ENCODE measurements at regions of chr4 and their contacts with region 1.

Region 1: DNA sequence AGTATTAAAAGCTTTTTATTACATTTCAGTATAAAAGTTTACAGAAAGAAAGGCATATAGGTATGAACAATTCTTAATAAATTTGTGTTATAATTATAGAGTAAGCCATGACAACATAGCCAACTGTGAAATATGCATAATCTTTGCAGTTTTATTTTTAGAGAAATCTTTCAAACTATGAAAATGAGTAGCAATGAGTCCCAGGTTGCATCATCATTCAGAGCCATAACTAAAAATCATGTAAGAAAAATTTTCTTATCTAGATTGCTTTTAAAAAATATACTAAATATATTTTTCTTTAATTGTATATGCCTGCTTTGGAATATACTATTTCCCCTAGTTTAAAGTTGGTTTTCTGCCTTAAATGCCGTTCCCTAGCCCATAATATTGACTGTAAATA is 54.8 kb upstream of the NAF1 start:
- DNase-seq: no peak
- H3K4me3 Mint-ChIP-seq: no peak overlapping the region
- H3K27ac Mint-ChIP-seq: no peak overlapping the region
- H3K4me1 Mint-ChIP-seq: no peaks in the 10 kb centered on the region
- H3K27me3 Mint-ChIP-seq: peaks cover 5% of the 10 kb centered on the region

Region 2: GRCh38 chr4:162727232-162727631 is 494.2 kb before region 1 on chr4:
- CTCF ChIA-PET with region 1: no interaction called
- POLR2A ChIA-PET with region 1: no interaction called
- intact Hi-C with region 1: no loop called
- DNase-seq: no peak
- H3K4me3 Mint-ChIP-seq: no peak overlapping the region
- H3K27ac Mint-ChIP-seq: no peak overlapping the region
- H3K4me1 Mint-ChIP-seq: no peaks in the 10 kb centered on the region
- H3K27me3 Mint-ChIP-seq: no peaks in the 10 kb centered on the region

Region 3: GRCh38 chr4:163284304-163284703 is 62.8 kb after region 1 on chr4:
- CTCF ChIA-PET with region 1: no interaction called
- POLR2A ChIA-PET with region 1: no interaction called
- intact Hi-C with region 1: loop called (anchors 10 kb)
- DNase-seq: no peak
- H3K4me3 Mint-ChIP-seq: no peak overlapping the region
- H3K27ac Mint-ChIP-seq: no peak overlapping the region
- H3K4me1 Mint-ChIP-seq: no peaks in the 10 kb centered on the region
- H3K27me3 Mint-ChIP-seq: peaks cover 7% of the 10 kb centered on the region

Measured in activated CD4-positive, alpha-beta memory T cell treated with anti-CD3 and anti-CD28 coated beads for 36 hours (primary cell).